A549 (cell line): ENCODE measurements at regions of chr11 and their contacts with region 1.

Region 1: GRCh38 chr11:125568970-125569914 is at the start of gene EI24:
- DNase-seq: peak; percentile 65 to 91
- ATAC-seq: peak; percentile 99
- H3K4me3 ChIP-seq: peak within 1 kb of the TSS; percentile 94
- H3K27ac ChIP-seq: peak within 1 kb of the TSS; percentile 94 to 100
- H3K4me1 ChIP-seq: peaks cover 10% of the 10 kb centered on the region; the same call in 2 of the 3 replicates
- CTCF ChIP-seq: peak; percentile 32; the same call in 2 of the 3 replicates
- EP300 ChIP-seq: no peak
- POLR2A ChIP-seq: peak; percentile 75
- RAD21 ChIP-seq: 0 out of 5 replicates have a peak, but pooled peaks of 1 of the 2 experiments have one; percentile 29
- polyA plus RNA-seq, gene EI24: 132 and 138 TPM in 2 replicates

Region 2: GRCh38 chr11:125592305-125593112 is 23.3 kb after region 1 on chr11 and contains the start of gene STT3A:
- CTCF ChIA-PET with region 1: interaction called, 5 read pairs
- POLR2A ChIA-PET with region 1: interaction called, 16 read pairs
- DNase-seq: peak; percentile 88 to 99
- ATAC-seq: peak; percentile 97 to 98
- H3K4me3 ChIP-seq: peak within 1 kb of the TSS; percentile 78
- H3K27ac ChIP-seq: peak within 1 kb of the TSS; percentile 89 to 99
- H3K4me1 ChIP-seq: peaks cover 23% of the 10 kb centered on the region; the same call in 2 of the 3 replicates
- CTCF ChIP-seq: no peak
- EP300 ChIP-seq: no peak
- POLR2A ChIP-seq: peak; percentile 50
- RAD21 ChIP-seq: no peak
- polyA plus RNA-seq, gene STT3A: 197 and 283 TPM in 2 replicates